ENCODE measurements at regions of chr2 and their contacts with region 1.

Region 1: DNA sequence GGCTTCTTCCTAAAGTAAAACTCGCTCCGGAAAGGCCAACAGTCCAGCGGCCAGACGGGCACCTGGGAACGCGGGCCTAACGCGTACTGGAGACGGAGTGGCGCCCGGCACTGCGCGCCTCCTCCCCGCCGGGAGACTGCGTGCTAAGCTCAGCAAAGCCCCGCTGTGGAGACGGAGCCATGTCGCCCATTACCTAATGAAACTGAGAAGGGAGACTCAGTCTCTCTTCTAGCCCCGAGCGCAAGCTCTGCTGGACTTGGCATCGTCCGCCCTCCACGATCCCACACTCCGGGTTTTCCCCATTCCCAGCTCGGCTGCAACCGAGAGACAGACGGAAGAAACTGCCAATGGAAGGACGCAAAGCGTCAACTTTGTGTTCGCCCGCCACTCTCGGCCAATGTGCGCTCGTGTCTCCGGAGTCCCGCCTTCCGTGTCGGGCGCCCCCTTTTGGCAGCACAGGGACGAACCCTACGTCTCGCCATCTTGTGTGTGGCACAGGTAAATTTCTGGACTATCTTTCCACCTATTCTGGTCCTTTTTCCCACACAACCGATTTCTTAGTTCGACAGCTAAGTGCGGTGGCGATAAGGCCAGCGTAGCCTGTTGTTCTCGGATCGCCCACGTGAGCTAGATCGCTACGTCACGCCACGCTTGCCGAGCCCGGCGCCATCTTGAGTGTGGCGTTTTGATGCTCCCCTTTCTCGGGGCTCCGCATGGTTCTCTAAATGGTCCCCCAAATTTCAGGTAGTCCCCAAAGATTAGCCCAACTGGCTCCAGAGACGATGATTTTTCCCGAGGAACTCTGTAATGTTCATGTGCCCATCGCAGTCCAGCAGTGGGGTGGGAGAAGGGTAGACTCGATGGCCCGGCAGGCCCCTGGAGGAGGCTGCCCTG is 1.3 kb upstream of the PTMA start:
- DNase-seq: peak; percentile 93
- H3K4me3 ChIP-seq: peak overlapping the region; percentile 80 to 83
- H3K27ac ChIP-seq: peak overlapping the region; percentile 92 to 100
- H3K4me1 ChIP-seq: peaks cover 5 to 20% of the 10 kb centered on the region in 2 experiments; a peak in 2 of 4 replicates
- H3K27me3 ChIP-seq: no peaks in the 10 kb centered on the region
- CTCF ChIP-seq: peak; percentile 98
- EP300 ChIP-seq: peak in 1 of 2 experiments; percentile 9; a peak in 1 of 4 replicates
- RAD21 ChIP-seq: no peak

Region 2: DNA sequence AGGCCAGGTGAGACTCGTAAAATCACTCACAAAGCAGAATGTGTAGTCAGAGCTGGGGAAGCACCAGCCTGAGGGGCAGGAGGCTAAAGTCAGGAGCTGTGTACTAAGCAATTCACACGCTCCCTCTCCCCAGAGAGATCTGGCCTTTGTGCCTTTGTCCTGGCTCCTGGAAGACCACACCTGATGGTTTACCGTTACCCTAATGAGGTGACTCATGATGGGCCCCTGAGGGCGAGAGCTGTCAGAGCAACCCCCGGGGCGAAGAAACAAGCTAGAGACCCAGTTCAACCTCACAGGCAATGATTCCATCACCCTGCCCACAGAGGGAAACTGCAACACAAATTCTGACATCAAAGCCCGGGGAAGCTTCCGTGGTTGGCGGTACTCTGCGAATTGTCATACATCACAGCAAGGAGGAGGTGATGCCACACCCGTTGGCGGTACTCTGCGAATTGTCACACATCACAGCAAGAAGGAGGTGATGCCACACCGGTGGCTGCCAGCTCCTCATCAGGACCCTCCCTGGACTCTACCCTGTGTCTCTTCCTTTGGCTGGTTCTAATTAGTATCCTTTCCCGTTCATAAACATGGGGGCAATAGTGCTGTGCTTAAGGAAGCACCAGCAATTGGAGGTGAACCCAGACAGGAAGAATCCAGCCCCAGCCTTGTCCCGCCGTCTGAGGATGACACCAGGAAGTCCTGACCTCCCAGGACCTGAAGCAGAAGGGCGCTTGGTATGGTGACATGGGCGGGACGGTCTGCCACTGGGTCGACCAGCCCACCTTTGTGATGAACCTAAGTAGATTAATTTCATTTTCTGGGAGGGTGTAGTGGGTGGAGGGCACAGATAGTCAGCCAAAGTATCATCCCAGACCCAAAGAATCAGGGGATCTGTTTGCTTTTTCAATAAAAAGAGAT is 280.9 kb before region 1 on chr2:
- CTCF ChIA-PET with region 1: no interaction called
- POLR2A ChIA-PET with region 1: no interaction called
- DNase-seq: no peak
- H3K4me3 ChIP-seq: no peak overlapping the region
- H3K27ac ChIP-seq: no peak overlapping the region
- H3K4me1 ChIP-seq: no peaks in the 10 kb centered on the region
- H3K27me3 ChIP-seq: no peaks in the 10 kb centered on the region
- CTCF ChIP-seq: no peak
- EP300 ChIP-seq: no peak
- RAD21 ChIP-seq: no peak

Region 3: GRCh38 chr2:231583982-231584381 is 123.0 kb before region 1 on chr2:
- CTCF ChIA-PET with region 1: no interaction called
- POLR2A ChIA-PET with region 1: no interaction called
- DNase-seq: no peak
- H3K4me3 ChIP-seq: no peak overlapping the region
- H3K27ac ChIP-seq: no peak overlapping the region
- H3K4me1 ChIP-seq: no peaks in the 10 kb centered on the region
- H3K27me3 ChIP-seq: no peaks in the 10 kb centered on the region
- CTCF ChIP-seq: no peak
- EP300 ChIP-seq: no peak
- RAD21 ChIP-seq: no peak

Region 4: GRCh38 chr2:231612179-231613053 is 94.6 kb before region 1 on chr2:
- CTCF ChIA-PET with region 1: interaction called, 109 read pairs
- POLR2A ChIA-PET with region 1: interaction called, 10 read pairs
- DNase-seq: peak; percentile 93
- H3K4me3 ChIP-seq: peak overlapping the region in 1 of 2 experiments; percentile 40; a peak in 1 of 4 replicates
- H3K27ac ChIP-seq: peak overlapping the region in 1 of 2 experiments; percentile 89; a peak in 3 of 4 replicates
- H3K4me1 ChIP-seq: peaks cover 24 to 26% of the 10 kb centered on the region in 2 experiments; a peak in 3 of 4 replicates
- H3K27me3 ChIP-seq: no peaks in the 10 kb centered on the region
- CTCF ChIP-seq: peak; percentile 97
- EP300 ChIP-seq: peak in 1 of 2 experiments; percentile 27; a peak in 1 of 4 replicates
- RAD21 ChIP-seq: peak; percentile 85

Region 5: GRCh38 chr2:231680992-231681853 is 25.8 kb before region 1 on chr2:
- CTCF ChIA-PET with region 1: interaction called, 1,218 read pairs
- POLR2A ChIA-PET with region 1: interaction called, 38 read pairs
- DNase-seq: peak; percentile 99
- H3K4me3 ChIP-seq: peak overlapping the region; percentile 54 to 57; a peak in 3 of 4 replicates
- H3K27ac ChIP-seq: peak overlapping the region; percentile 54 to 84
- H3K4me1 ChIP-seq: peaks cover 0 to 16% of the 10 kb centered on the region in 2 experiments; a peak in 1 of 4 replicates
- H3K27me3 ChIP-seq: no peaks in the 10 kb centered on the region
- CTCF ChIP-seq: no peak
- EP300 ChIP-seq: no peak
- RAD21 ChIP-seq: no peak

Region 6: DNA sequence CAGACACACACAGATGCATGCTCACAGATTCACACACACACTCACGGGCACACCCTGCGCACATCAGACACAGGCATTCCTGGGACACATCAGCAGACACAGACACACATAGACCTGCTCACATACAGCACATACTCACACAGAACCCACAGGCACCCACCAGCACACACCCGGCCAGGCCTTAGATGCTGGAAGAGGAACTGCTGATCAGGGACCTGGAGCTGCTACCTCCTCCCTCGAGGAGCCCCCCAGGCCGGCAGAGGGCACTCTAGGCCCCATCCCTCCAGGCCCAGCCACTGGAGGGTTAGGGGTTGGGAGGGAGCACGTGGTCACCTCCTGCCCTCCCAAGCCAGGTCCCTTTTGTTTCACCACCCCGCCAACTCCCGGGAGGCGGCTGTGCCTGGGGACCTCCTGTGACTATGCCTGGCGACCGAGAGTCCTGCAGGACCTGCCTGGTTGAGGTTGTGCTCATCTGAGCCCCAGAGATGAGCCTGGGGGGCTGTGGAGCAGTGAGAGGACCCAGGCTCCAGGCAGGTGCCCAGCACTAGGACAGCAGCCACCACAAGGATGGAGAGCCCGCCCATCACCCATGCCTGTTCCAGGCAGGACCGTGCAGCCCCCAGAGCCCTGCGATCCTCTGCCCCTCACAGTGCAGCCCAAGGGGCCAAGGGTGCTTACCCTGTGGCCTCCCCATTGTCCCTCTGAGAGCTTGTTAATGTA is 19.7 kb before region 1 on chr2:
- CTCF ChIA-PET with region 1: interaction called, 1,218 read pairs
- POLR2A ChIA-PET with region 1: interaction called, 38 read pairs
- DNase-seq: peak; percentile 89
- H3K4me3 ChIP-seq: no peak overlapping the region
- H3K27ac ChIP-seq: peak overlapping the region in 1 of 2 experiments; percentile 3; a peak in 1 of 4 replicates
- H3K4me1 ChIP-seq: peaks cover 0 to 15% of the 10 kb centered on the region in 2 experiments; a peak in 1 of 4 replicates
- H3K27me3 ChIP-seq: no peaks in the 10 kb centered on the region
- CTCF ChIP-seq: peak; percentile 59
- EP300 ChIP-seq: no peak
- RAD21 ChIP-seq: peak; percentile 46; the same call in 1 of the 2 replicates

Region 7: DNA sequence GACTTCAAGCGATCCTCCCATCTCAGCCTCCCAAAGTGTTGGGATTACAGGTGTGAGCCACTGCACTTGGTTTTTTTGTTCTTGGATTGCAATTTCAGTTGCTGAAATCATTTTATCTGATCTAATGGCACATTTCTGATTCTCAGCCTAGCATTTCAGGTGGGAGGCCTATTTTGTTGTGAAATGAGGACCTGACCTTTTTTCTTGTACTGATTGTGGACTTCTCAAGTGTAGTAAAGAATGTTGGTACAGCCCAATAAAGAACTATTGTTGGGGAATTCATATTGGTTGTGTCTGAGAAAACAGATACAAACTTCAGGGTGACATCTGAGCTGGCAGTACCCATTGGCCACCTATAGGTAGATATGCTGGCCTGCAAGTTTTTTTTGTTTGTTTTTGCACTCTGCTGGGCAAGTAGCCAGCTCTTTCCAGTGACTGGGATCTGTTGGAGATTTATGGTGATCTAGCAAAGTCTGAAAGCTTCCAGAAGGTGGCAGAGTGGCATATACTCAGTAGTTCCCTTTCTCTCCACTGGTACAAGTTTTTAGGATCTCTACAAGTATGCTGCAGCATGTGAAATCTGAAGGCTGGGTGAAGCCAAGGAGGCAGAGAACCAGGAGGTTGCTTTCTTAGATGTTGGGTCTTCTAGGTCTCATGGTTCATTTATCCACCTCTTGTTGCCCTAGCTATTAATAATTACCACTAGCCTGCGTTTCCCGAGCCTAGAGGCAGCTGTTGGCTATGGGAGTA is 88.5 kb after region 1 on chr2:
- CTCF ChIA-PET with region 1: interaction called, 11 read pairs
- POLR2A ChIA-PET with region 1: interaction called, 9 read pairs
- DNase-seq: peak; percentile 78
- H3K4me3 ChIP-seq: no peak overlapping the region
- H3K27ac ChIP-seq: peak overlapping the region; percentile 2 to 91; a peak in 3 of 4 replicates
- H3K4me1 ChIP-seq: peaks cover 0 to 29% of the 10 kb centered on the region in 2 experiments; a peak in 2 of 4 replicates
- H3K27me3 ChIP-seq: no peaks in the 10 kb centered on the region
- CTCF ChIP-seq: peak; percentile 63
- EP300 ChIP-seq: peak in 1 of 2 experiments; percentile 71; a peak in 2 of 4 replicates
- RAD21 ChIP-seq: peak; percentile 28; the same call in 1 of the 2 replicates

Measured in SK-N-SH (cell line).